T-cell (primary cell): ENCODE measurements at regions of chr10 and their contacts with region 1.

Region 1: DNA sequence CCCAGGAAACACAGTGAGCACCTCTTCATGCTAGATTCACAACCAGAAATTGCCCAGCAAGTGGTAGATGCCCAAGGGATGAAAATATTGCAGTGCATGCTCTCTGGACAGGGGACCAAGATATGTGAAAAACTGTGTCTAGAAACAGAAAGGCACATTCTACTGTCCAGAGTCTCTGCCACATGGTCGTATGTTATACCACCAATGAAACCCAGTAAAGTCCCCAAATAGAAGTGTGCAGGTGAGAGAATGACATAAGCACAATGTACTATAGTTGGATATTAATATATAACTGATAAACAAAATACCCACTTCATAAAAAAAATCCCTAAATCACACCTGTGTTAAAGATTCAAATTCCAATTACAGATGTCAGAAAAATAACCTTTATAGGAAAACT is 43.8 kb downstream of the RASGEF1A start:
- DNase-seq: no peak
- ATAC-seq: no peak
- H3K4me3 ChIP-seq: no peak overlapping the region
- H3K4me3 Mint-ChIP-seq: no peak overlapping the region
- H3K27ac ChIP-seq: no peak overlapping the region
- H3K27ac Mint-ChIP-seq: no peak overlapping the region
- H3K4me1 ChIP-seq: peaks cover 0 to 39% of the 10 kb centered on the region in 2 experiments
- H3K4me1 Mint-ChIP-seq: peaks cover 6 to 32% (median 15%) of the 10 kb centered on the region in 3 donors
- H3K27me3 ChIP-seq: peaks cover 0 to 24% of the 10 kb centered on the region in 2 experiments
- H3K27me3 Mint-ChIP-seq: peaks cover 4 to 7% of the 10 kb centered on the region in 2 donors

Region 2: GRCh38 chr10:43170491-43170890 is 52.6 kb before region 1 on chr10:
- CTCF ChIA-PET with region 1: no interaction called
- POLR2A ChIA-PET with region 1: no interaction called
- DNase-seq: no peak
- ATAC-seq: no peak
- H3K4me3 ChIP-seq: no peak overlapping the region
- H3K4me3 Mint-ChIP-seq: no peak overlapping the region
- H3K27ac ChIP-seq: no peak overlapping the region
- H3K27ac Mint-ChIP-seq: peak overlapping the region in 1 of 2 donors; percentile 36
- H3K4me1 ChIP-seq: peaks cover 0 to 10% of the 10 kb centered on the region in 2 experiments
- H3K4me1 Mint-ChIP-seq: peaks cover 23 to 35% (median 28%) of the 10 kb centered on the region in 3 donors
- H3K27me3 ChIP-seq: no peaks in the 10 kb centered on the region
- H3K27me3 Mint-ChIP-seq: no peaks in the 10 kb centered on the region

Region 3: GRCh38 chr10:43436400-43437140 is 213.5 kb after region 1 on chr10 and contains the start of gene ZNF487:
- CTCF ChIA-PET with region 1: interaction called in 1 of 2 experiments, 11 read pairs
- POLR2A ChIA-PET with region 1: no interaction called
- DNase-seq: peak; percentile 72 to 94 (median 83)
- ATAC-seq: peak; percentile 90 to 95 (median 95)
- H3K4me3 ChIP-seq: peak within 1 kb of the TSS; percentile 72 to 92
- H3K4me3 Mint-ChIP-seq: peak within 1 kb of the TSS; percentile 95 to 96 (median 95)
- H3K27ac ChIP-seq: peak within 1 kb of the TSS; percentile 89
- H3K27ac Mint-ChIP-seq: peak within 1 kb of the TSS; percentile 98 to 99
- H3K4me1 ChIP-seq: peaks cover 4 to 25% of the 10 kb centered on the region in 2 experiments
- H3K4me1 Mint-ChIP-seq: peaks cover 16 to 32% (median 18%) of the 10 kb centered on the region in 3 donors
- H3K27me3 ChIP-seq: no peaks in the 10 kb centered on the region
- H3K27me3 Mint-ChIP-seq: no peaks in the 10 kb centered on the region
- total RNA-seq, gene ZNF487: 3.2 to 8.5 (median 5.2) TPM